ENCODE measurements at regions of chr15 and their contacts with region 1.

Region 1: GRCh38 chr15:70826634-70827033 is 27.3 kb downstream of the LARP6 start:
- DNase-seq: peak in 2 of 42 donors; percentile 40 to 43

Region 2: DNA sequence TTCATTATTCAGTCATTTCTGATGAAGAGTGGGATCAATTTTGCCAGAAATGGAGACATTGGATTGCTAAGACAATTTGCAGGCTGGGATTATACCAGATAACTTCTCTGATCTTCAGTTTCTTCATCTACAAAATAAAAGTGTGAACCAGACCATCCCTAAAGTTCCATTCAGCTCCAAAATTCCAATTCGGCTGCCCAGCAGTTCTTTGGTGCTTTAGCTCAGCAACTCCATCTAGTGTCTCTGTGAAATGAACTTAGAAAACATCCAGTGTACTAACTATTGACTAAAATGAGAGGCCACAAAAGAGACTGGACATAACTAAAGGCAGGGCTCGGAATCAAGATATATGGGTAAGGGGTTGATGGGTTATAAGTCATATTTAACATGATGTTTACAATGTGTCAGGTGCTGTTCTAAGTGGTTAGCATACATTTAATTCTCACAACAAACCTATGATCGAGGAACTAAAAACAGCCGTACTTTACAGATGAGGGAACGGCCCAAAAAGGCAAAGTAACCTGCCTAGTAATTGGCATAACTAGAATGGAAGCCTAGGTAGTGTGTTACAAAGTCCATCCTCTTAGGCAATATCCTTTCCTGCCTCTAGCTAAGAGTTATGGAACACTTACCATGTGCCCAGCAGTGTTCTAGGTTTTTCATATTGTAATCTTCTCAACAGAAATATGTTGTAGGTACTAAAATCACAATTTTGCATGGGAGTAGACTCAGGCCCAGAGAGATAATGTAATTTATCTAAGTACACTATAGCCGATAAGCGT is 48.6 kb after region 1 on chr15:
- intact Hi-C with region 1: loop called (anchors 5 kb)
- DNase-seq: peak in 18 of 42 donors; percentile 27 to 80 (median 56)

Region 3: GRCh38 chr15:71114896-71115554 is 288.4 kb after region 1 on chr15 and contains the start of gene THSD4:
- intact Hi-C with region 1: no loop called
- DNase-seq: peak in 37 of 42 donors; percentile 9 to 79 (median 47)